ENCODE measurements at regions of chr6 and their contacts with region 1.

Region 1: GRCh38 chr6:11423072-11423471 is 114.5 kb upstream of the TMEM170B start:
- DNase-seq: peak; percentile 54
- H3K4me3 Mint-ChIP-seq: peak overlapping the region; percentile 58
- H3K27ac Mint-ChIP-seq: peak overlapping the region; percentile 86
- H3K4me1 Mint-ChIP-seq: peaks cover 43% of the 10 kb centered on the region
- H3K27me3 Mint-ChIP-seq: no peaks in the 10 kb centered on the region

Region 2: DNA sequence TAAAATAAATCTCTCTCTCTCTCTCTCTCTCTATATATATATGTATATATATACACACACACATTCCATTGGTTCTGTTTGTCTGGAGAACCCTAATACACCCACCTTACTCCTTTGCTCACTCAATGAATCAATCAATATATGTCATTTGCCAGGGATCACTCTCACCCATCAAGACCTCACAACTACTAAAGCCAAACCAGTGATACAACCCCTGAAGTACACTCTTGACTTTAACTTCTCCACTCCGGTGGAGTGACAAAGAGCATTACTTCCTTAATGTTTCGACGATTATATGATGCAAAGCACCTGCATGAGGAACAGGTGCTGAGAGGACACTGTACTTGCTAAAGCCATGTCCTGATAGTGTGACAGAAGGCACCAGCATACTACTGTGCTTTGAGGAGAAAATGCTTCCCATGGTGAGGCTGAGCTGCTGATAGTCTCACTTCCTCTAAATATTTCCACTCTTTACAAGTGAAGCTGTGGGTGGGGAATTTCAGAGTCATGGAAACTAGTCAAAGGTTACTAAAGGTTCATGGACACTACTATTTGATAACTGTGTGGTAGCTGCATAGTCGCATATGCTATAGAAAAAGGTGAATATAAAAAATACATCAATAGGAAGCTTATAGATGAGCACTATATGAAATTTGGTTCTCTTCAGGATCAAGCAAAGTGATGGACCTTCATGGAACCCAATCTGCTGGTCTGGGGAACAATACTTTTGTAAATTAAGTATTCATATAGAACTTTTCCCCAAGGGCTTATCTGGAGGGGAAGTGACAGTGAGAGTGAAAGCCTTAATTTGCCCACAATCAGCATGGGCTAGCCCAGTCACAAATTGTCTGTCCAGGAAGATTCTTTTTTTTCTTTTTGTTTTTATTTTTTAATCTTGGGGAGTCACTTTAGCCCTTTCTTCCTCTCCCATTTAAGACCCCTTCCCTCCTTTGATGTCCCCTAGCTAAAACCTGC is 48.7 kb before region 1 on chr6:
- intact Hi-C with region 1: loop called (anchors 2 kb)
- DNase-seq: peak; percentile 67
- H3K4me3 Mint-ChIP-seq: peak overlapping the region; percentile 58
- H3K27ac Mint-ChIP-seq: peak overlapping the region; percentile 80
- H3K4me1 Mint-ChIP-seq: peaks cover 56% of the 10 kb centered on the region
- H3K27me3 Mint-ChIP-seq: no peaks in the 10 kb centered on the region

Region 3: GRCh38 chr6:11447265-11447664 is 24.2 kb after region 1 on chr6:
- intact Hi-C with region 1: loop called (anchors 1 kb)
- DNase-seq: no peak
- H3K4me3 Mint-ChIP-seq: no peak overlapping the region
- H3K27ac Mint-ChIP-seq: no peak overlapping the region
- H3K4me1 Mint-ChIP-seq: peaks cover 23% of the 10 kb centered on the region
- H3K27me3 Mint-ChIP-seq: no peaks in the 10 kb centered on the region